Natural killer cell (primary cell): ENCODE measurements at regions of chr3 and their contacts with region 1.

Region 1: GRCh38 chr3:111071257-111072015 is at the start of gene NECTIN3:
- DNase-seq: peak; percentile 53 to 93
- ATAC-seq: peak; percentile 88 to 90 (median 90)
- H3K4me3 ChIP-seq: peak within 1 kb of the TSS; percentile 57
- H3K4me3 Mint-ChIP-seq: peak within 1 kb of the TSS; percentile 92
- H3K27ac ChIP-seq: peak within 1 kb of the TSS; percentile 4
- H3K27ac Mint-ChIP-seq: peak within 1 kb of the TSS; percentile 61 to 88
- H3K4me1 ChIP-seq: peaks cover 19% of the 10 kb centered on the region
- H3K4me1 Mint-ChIP-seq: peaks cover 27 to 32% of the 10 kb centered on the region in 2 donors
- H3K27me3 ChIP-seq: peaks cover 25% of the 10 kb centered on the region
- H3K27me3 Mint-ChIP-seq: peaks cover 30 to 34% of the 10 kb centered on the region in 2 donors
- CTCF ChIP-seq: no peak
- total RNA-seq, gene NECTIN3: 0.26 to 3.7 (median 2.3) TPM

Region 2: GRCh38 chr3:111027868-111028267 is 43.6 kb before region 1 on chr3:
- intact Hi-C with region 1: no loop called
- DNase-seq: no peak
- ATAC-seq: no peak
- H3K4me3 ChIP-seq: no peak overlapping the region
- H3K4me3 Mint-ChIP-seq: no peak overlapping the region
- H3K27ac ChIP-seq: no peak overlapping the region
- H3K27ac Mint-ChIP-seq: no peak overlapping the region
- H3K4me1 ChIP-seq: no peaks in the 10 kb centered on the region
- H3K4me1 Mint-ChIP-seq: no peaks in the 10 kb centered on the region
- H3K27me3 ChIP-seq: no peaks in the 10 kb centered on the region
- H3K27me3 Mint-ChIP-seq: peaks cover 5 to 7% of the 10 kb centered on the region in 2 donors
- CTCF ChIP-seq: no peak

Region 3: DNA sequence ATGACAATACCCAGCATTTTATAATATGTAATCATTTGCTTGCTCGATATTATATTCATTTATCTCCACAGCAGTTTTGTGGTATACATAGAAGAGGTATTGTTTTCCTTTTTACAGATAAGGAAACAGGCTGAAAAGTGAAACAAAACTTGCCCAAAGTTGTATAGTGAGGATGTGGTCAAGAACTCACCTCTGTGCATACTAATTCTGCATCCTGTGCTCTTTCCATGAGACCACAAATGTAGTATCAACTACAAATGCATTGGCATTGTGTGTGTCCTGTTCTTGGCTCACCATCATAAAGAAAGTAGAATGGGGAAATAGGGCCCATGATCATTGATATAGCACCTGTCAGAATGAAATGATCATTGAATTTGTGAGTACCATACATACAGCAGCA is 167.4 kb after region 1 on chr3:
- intact Hi-C with region 1: loop called (anchors 5 kb)
- DNase-seq: peak in 1 of 2 donors; percentile 58
- ATAC-seq: peak; percentile 73 to 90 (median 74)
- H3K4me3 ChIP-seq: no peak overlapping the region
- H3K4me3 Mint-ChIP-seq: peak overlapping the region; percentile 54
- H3K27ac ChIP-seq: peak overlapping the region; percentile 11
- H3K27ac Mint-ChIP-seq: peak overlapping the region; percentile 47 to 55
- H3K4me1 ChIP-seq: no peaks in the 10 kb centered on the region
- H3K4me1 Mint-ChIP-seq: peaks cover 28 to 36% of the 10 kb centered on the region in 2 donors
- H3K27me3 ChIP-seq: no peaks in the 10 kb centered on the region
- H3K27me3 Mint-ChIP-seq: no peaks in the 10 kb centered on the region
- CTCF ChIP-seq: no peak